Mammary epithelial cell (primary cell): ENCODE measurements at regions of chr12 and their contacts with region 1.

Region 1: GRCh38 chr12:21697904-21698630 is 40.4 kb upstream of the LDHB start:
- DNase-seq: peak; percentile 6
- H3K4me3 ChIP-seq: no peak overlapping the region
- H3K27ac ChIP-seq: no peak overlapping the region
- H3K4me1 ChIP-seq: no peaks in the 10 kb centered on the region
- H3K27me3 ChIP-seq: no peaks in the 10 kb centered on the region
- CTCF ChIP-seq: peak; percentile 48 to 54

Region 2: DNA sequence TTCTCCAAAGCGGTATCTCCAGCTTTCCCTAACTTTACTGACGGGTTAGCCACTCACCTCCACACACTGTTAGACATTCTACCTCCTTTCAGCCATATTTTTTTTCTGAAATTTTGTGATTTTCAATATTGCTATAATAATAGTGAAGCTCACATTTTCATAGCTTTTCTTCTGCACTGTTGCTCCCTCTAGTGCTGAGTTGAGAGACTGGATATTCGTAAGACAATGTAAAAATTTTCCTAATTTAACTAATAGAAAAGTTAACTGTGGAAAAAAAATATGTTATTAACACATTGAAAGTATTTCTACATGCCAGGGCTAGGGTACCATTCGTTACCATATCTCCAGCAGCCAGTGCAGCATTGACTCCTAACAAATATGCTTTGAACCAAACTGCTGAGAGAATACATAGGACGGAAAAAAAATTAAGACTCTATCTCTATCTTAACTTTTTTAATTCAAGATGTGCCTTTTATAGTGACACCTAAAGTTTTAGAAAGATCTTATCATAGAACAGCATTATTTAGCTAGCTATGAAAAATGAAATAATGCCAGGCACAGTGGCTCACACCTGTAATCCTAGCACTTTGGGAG is 291.8 kb after region 1 on chr12:
- CTCF ChIA-PET with region 1: interaction called, 26 read pairs
- dilution Hi-C with region 1: no loop called
- in situ Hi-C with region 1: loop called (anchors 5 kb)
- intact Hi-C with region 1: loop called (anchors 1 kb)
- DNase-seq: no peak
- H3K4me3 ChIP-seq: no peak overlapping the region
- H3K27ac ChIP-seq: no peak overlapping the region
- H3K4me1 ChIP-seq: no peaks in the 10 kb centered on the region
- H3K27me3 ChIP-seq: no peaks in the 10 kb centered on the region
- CTCF ChIP-seq: peak; percentile 57 to 66

Region 3: DNA sequence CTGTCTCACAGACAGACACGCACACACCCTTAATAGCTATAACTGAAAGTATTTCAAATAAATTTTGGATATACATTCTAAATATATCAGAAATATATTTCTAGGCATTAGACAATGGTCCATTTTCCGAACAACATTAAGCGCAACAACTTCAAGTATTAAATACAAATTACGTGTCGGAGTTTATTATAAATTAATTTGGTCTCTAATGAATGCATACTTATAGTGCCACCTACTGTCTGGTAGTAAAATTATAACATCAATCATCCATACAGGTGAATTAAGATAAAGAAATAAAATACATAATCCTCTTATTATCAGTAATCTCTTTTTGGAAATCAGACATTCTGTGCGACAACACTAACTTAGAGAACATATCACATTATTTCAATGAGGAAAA is 320.8 kb after region 1 on chr12:
- CTCF ChIA-PET with region 1: interaction called, 12 read pairs
- dilution Hi-C with region 1: no loop called
- in situ Hi-C with region 1: loop called in 1 of 2 experiments (anchors 10 kb)
- intact Hi-C with region 1: loop called (anchors 2 kb)
- DNase-seq: no peak
- H3K4me3 ChIP-seq: no peak overlapping the region
- H3K27ac ChIP-seq: no peak overlapping the region
- H3K4me1 ChIP-seq: no peaks in the 10 kb centered on the region
- H3K27me3 ChIP-seq: no peaks in the 10 kb centered on the region
- CTCF ChIP-seq: peak; percentile 33 to 53